ENCODE measurements at regions of chr11 and their contacts with region 1.

Region 1: GRCh38 chr11:117843666-117844484 is 19.3 kb upstream of the FXYD2 start:
- DNase-seq: peak; percentile 62 to 96 (median 82)
- ATAC-seq: peak; percentile 78 to 91 (median 90)
- H3K4me3 ChIP-seq: no peak overlapping the region
- H3K27ac ChIP-seq: no peak overlapping the region
- H3K4me1 ChIP-seq: no peaks in the 10 kb centered on the region
- H3K27me3 ChIP-seq: no peaks in the 10 kb centered on the region
- CTCF ChIP-seq: peak; percentile 96 to 99 (median 99)

Region 2: GRCh38 chr11:117535261-117535781 is 308.6 kb before region 1 on chr11:
- intact Hi-C with region 1: no loop called
- DNase-seq: peak in 5 of 6 donors; percentile 29 to 72 (median 57)
- ATAC-seq: peak; percentile 40 to 80 (median 70)
- H3K4me3 ChIP-seq: no peak overlapping the region
- H3K27ac ChIP-seq: peak overlapping the region in 2 of 4 donors; percentile 10 to 46
- H3K4me1 ChIP-seq: no peaks in the 10 kb centered on the region
- H3K27me3 ChIP-seq: no peaks in the 10 kb centered on the region
- CTCF ChIP-seq: no peak

Region 3: GRCh38 chr11:117717485-117718314 is 126.2 kb before region 1 on chr11:
- intact Hi-C with region 1: no loop called
- DNase-seq: peak in 5 of 6 donors; percentile 34 to 66 (median 56)
- ATAC-seq: peak; percentile 75 to 84 (median 82)
- H3K4me3 ChIP-seq: no peak overlapping the region
- H3K27ac ChIP-seq: peak overlapping the region in 3 of 4 donors; percentile 25 to 59 (median 46)
- H3K4me1 ChIP-seq: no peaks in the 10 kb centered on the region
- H3K27me3 ChIP-seq: no peaks in the 10 kb centered on the region
- CTCF ChIP-seq: no peak

Region 4: GRCh38 chr11:117786135-117786890 is 57.6 kb before region 1 on chr11:
- intact Hi-C with region 1: no loop called
- DNase-seq: no peak
- ATAC-seq: peak in 2 of 4 donors; percentile 55 to 70
- H3K4me3 ChIP-seq: no peak overlapping the region
- H3K27ac ChIP-seq: no peak overlapping the region
- H3K4me1 ChIP-seq: no peaks in the 10 kb centered on the region
- H3K27me3 ChIP-seq: no peaks in the 10 kb centered on the region
- CTCF ChIP-seq: no peak

Region 5: DNA sequence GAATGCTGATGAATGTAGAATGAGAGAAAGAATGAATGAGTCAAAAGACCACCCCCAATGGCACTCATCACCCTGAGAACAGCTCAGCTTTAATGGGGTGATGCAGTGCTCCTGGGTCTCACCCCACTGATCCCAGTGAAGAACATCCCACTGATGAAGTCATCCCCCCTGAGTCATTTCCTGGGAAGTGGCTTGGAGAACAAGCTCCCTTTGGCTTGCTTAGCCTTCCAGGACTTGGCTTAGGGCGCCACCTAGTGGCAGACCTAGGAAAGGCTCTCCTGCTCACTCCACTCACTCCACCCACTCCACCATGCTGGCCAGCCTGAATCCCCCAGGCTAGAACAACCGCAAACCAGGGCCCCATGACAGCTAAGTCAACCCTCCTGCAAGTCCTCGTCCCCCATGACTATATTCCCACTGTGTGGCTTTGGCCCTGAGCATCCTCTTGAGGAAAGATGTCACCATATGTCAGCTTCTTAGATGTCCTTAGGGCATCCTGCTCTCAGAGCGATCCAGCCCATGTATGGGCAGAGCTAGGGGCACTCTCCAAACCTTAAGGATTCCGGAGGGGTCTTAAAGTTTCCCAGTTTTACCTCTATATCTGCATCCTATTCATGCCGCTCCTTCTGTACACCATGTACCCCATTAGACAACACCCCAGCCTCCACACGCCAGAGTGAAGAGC is 103.1 kb after region 1 on chr11:
- intact Hi-C with region 1: loop called in 2 of 3 experiments (anchors 5 kb)
- DNase-seq: peak; percentile 76 to 99 (median 91)
- ATAC-seq: peak; percentile 96 to 99 (median 98)
- H3K4me3 ChIP-seq: no peak overlapping the region
- H3K27ac ChIP-seq: no peak overlapping the region
- H3K4me1 ChIP-seq: no peaks in the 10 kb centered on the region
- H3K27me3 ChIP-seq: no peaks in the 10 kb centered on the region
- CTCF ChIP-seq: peak; percentile 96 to 97 (median 96)

Measured in pancreas (tissue), 10 donors.